Activated CD8-positive, alpha-beta T cell treated with anti-CD3 and anti-CD28 coated beads for 36 hours (primary cell): ENCODE measurements at regions of chr9 and their contacts with region 1.

Region 1: DNA sequence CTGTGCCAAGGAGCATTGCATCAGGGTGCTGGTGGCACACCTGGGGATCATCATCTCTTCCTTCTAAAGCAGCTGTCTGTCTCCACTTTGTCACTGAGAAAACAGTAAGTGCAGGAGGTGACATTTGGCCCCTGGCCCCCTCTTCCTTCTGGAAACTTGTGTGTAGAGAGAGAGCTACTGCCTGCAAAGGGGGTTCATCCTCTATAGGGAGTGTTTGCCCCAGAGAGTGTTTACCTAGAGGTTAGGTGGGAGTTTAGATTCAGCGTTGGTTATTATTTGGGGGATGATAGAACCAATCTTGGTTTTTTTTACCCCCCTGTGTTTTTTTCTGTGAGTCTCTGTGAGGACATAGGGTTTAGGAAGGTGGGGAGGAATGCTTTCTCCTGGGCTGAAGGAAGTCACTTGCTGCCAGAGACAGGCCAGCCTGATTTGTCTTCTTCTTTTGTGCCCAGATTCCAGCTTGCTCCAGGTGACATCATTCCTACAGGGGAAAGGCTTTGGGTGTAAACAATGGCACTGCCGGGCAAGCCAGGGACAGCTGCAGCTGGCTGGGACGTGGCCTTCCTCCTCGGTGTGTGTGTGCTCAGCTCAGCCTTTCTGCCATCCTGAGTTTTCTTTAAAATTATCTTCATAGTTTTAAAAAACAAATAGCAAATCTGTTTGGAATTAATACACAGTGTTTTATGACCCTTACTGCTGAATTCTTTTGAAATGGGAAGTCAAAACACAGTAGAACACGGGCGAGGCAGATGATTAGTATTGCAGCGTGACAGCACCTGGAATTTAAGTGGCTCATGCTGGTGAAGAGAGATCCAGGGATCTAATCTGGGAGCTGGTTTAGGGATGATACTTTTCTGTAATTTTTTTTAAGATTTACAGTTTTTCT is 24.5 kb downstream of the PRRC2B start:
- DNase-seq: no peak
- ATAC-seq: no peak
- H3K4me3 Mint-ChIP-seq: peak overlapping the region; percentile 51
- H3K27ac Mint-ChIP-seq: peak overlapping the region; percentile 90
- H3K4me1 Mint-ChIP-seq: peaks cover 86% of the 10 kb centered on the region
- H3K27me3 Mint-ChIP-seq: no peaks in the 10 kb centered on the region
- CTCF ChIP-seq: no peak

Region 2: DNA sequence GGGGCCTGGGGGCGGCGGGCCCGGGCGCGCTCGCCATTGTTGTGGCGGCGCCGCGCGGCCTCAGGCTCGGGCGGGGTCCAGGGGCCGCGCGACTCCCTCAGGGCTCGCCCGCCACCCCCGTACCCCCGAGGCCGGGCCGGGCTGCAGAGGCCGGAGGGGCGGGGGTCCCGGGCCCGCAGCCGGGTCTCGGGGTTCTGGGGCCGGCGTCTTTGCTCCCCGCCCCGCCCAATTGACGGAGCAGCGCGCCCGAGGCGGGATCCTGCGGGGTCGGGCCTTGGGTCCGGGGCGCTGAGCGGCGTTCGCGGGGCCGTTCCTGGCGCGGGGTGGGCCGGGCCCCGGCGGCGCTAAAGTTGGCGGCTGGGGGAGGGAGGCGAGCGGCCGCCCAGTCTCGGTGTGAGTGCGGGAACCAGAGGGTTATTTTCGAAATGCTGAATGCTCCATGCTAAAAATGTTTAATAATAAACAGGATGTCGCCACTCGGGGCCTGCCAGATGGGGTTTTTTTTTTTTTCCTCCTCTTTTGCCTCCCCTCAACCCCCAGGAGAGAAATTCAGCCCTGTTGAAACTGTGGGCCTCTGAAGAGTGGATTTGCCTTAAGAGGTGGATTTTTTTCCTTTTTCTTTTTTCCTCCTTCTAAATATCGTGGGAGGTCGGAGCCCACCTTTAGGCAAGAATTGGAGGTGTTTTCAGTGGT is 23.8 kb before region 1 on chr9:
- CTCF ChIA-PET with region 1: interaction called, 3 read pairs
- POLR2A ChIA-PET with region 1: interaction called, 23 read pairs
- intact Hi-C with region 1: no loop called
- DNase-seq: peak; percentile 62
- ATAC-seq: peak; percentile 18
- H3K4me3 Mint-ChIP-seq: peak overlapping the region; percentile 95
- H3K27ac Mint-ChIP-seq: peak overlapping the region; percentile 95
- H3K4me1 Mint-ChIP-seq: peaks cover 45% of the 10 kb centered on the region
- H3K27me3 Mint-ChIP-seq: no peaks in the 10 kb centered on the region
- CTCF ChIP-seq: no peak

Region 3: GRCh38 chr9:131478421-131478868 is 60.1 kb after region 1 on chr9:
- CTCF ChIA-PET with region 1: no interaction called
- POLR2A ChIA-PET with region 1: no interaction called
- intact Hi-C with region 1: no loop called
- DNase-seq: peak; percentile 75
- ATAC-seq: peak; percentile 72
- H3K4me3 Mint-ChIP-seq: no peak overlapping the region
- H3K27ac Mint-ChIP-seq: peak overlapping the region; percentile 43
- H3K4me1 Mint-ChIP-seq: peaks cover 10% of the 10 kb centered on the region
- H3K27me3 Mint-ChIP-seq: no peaks in the 10 kb centered on the region
- CTCF ChIP-seq: peak; percentile 70